ENCODE measurements at regions of chr2 and their contacts with region 1.

Region 1: GRCh38 chr2:178796079-178796677 is 11.0 kb downstream of the TTN start:
- DNase-seq: peak; percentile 71
- H3K4me3 ChIP-seq: no peak overlapping the region
- H3K27ac ChIP-seq: no peak overlapping the region
- H3K4me1 ChIP-seq: no peaks in the 10 kb centered on the region
- H3K27me3 ChIP-seq: peaks cover 0 to 2% of the 10 kb centered on the region in 2 experiments
- CTCF ChIP-seq: peak; percentile 12 to 25
- POLR2A ChIP-seq: no peak

Region 2: GRCh38 chr2:178914259-178914849 is 118.2 kb after region 1 on chr2:
- CTCF ChIA-PET with region 1: interaction called, 94 read pairs
- POLR2A ChIA-PET with region 1: no interaction called
- dilution Hi-C with region 1: loop called (anchors 25 kb)
- intact Hi-C with region 1: loop called (anchors 1 kb)
- DNase-seq: peak; percentile 88
- H3K4me3 ChIP-seq: no peak overlapping the region
- H3K27ac ChIP-seq: no peak overlapping the region
- H3K4me1 ChIP-seq: peaks cover 2% of the 10 kb centered on the region
- H3K27me3 ChIP-seq: peaks cover 0 to 10% of the 10 kb centered on the region in 2 experiments
- CTCF ChIP-seq: peak; percentile 79 to 88
- POLR2A ChIP-seq: no peak

Region 3: DNA sequence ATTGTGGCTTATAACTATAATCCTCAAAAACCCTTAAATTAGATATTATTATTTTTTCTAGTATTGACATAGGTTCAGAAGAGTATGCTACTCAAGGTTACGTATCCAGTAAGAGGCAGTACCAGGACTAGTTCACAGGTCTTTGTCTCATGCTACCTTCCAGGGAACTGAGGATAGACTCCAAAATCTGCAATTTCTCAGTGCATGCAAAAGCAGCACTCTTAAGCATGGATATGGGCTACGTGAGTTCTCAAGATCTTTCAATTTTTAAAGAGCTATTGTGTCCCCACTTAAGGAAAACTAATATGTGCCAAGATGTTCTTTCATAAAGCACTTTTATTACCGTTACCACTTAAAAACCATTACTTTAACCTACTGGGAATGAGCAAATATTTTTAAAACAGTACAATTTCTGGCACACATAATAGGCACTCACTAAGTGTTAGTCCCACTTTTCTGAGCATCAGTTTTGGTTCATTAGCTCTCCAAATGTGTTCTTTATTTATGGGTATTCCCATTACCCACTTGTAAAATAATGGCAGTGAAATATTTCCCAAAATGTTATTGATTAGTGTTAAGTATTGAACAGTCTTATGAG is 124.8 kb after region 1 on chr2:
- CTCF ChIA-PET with region 1: interaction called, 58 read pairs
- POLR2A ChIA-PET with region 1: no interaction called
- dilution Hi-C with region 1: loop called (anchors 25 kb)
- intact Hi-C with region 1: no loop called
- DNase-seq: no peak
- H3K4me3 ChIP-seq: no peak overlapping the region
- H3K27ac ChIP-seq: no peak overlapping the region
- H3K4me1 ChIP-seq: no peaks in the 10 kb centered on the region
- H3K27me3 ChIP-seq: peaks cover 5 to 13% of the 10 kb centered on the region in 2 experiments
- CTCF ChIP-seq: no peak
- POLR2A ChIP-seq: no peak

Region 4: DNA sequence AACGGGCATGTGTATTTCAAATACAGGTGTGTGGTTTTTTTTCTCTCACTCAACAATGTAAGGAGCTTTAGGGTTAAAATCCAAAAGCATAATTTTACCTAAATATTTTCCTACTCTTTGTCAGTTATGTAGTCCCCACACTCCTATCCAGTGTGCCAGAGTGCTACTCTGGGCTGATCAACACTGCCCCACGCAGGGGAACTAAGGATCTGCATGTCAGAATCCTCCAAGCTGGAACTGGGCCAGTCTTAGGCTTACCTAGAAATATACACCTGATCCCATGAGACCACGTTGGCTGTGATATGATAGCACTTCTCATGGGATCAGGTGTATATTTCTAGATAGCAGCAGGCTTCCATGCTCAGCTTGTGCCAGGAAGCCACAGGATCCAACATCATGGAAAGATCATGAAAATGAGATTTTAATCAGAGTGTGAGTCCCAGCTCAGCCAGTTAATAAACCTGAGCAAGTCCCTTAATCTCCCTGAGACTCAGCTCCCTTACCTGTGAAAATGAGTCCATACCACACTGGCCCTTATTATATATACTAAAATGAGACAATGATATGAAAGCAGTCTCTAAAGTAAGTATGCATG is 224.1 kb after region 1 on chr2:
- CTCF ChIA-PET with region 1: interaction called, 10 read pairs
- POLR2A ChIA-PET with region 1: no interaction called
- dilution Hi-C with region 1: no loop called
- intact Hi-C with region 1: loop called (anchors 2 kb)
- DNase-seq: peak; percentile 28
- H3K4me3 ChIP-seq: no peak overlapping the region
- H3K27ac ChIP-seq: no peak overlapping the region
- H3K4me1 ChIP-seq: no peaks in the 10 kb centered on the region
- H3K27me3 ChIP-seq: no peaks in the 10 kb centered on the region
- CTCF ChIP-seq: peak; percentile 43 to 56
- POLR2A ChIP-seq: no peak

Region 5: GRCh38 chr2:179129574-179130238 is 333.5 kb after region 1 on chr2:
- CTCF ChIA-PET with region 1: interaction called, 57 read pairs
- POLR2A ChIA-PET with region 1: no interaction called
- dilution Hi-C with region 1: no loop called
- intact Hi-C with region 1: loop called (anchors 1 kb)
- DNase-seq: peak; percentile 35
- H3K4me3 ChIP-seq: no peak overlapping the region
- H3K27ac ChIP-seq: no peak overlapping the region
- H3K4me1 ChIP-seq: no peaks in the 10 kb centered on the region
- H3K27me3 ChIP-seq: no peaks in the 10 kb centered on the region
- CTCF ChIP-seq: peak; percentile 36 to 37
- POLR2A ChIP-seq: no peak

Measured in endothelial cell of umbilical vein (primary cell).